ENCODE measurements at regions of chr1 and their contacts with region 1.

Region 1: GRCh38 chr1:67561704-67562113 is 123.3 kb upstream of the GADD45A start:
- DNase-seq: peak; percentile 64 to 87 (median 79)
- ATAC-seq: peak; percentile 80
- H3K4me3 ChIP-seq: no peak overlapping the region
- H3K4me3 Mint-ChIP-seq: no peak overlapping the region
- H3K27ac ChIP-seq: no peak overlapping the region
- H3K27ac Mint-ChIP-seq: no peak overlapping the region
- H3K4me1 ChIP-seq: no peaks in the 10 kb centered on the region
- H3K4me1 Mint-ChIP-seq: no peaks in the 10 kb centered on the region
- H3K27me3 ChIP-seq: no peaks in the 10 kb centered on the region
- H3K27me3 Mint-ChIP-seq: peaks cover 10% of the 10 kb centered on the region
- CTCF ChIP-seq: peak; percentile 88

Region 2: DNA sequence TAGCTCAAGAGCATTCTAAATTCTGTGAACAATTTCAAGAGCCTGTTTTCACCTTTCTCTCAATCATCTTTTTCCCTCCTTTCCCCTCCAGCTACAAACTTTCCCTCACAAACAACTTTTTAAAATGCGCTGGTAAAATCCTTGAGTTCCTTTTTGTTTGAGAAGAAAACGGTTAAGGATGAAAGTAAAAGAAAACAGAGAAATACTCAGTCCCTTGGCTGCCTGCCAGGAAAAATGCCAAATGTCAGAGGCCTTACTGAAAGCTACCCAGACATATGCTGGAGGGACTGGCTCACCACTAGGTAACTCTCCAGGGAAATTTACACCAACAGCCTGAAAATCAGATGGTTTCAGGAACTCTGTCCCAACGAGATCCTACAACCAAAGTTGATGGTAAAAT is 120.5 kb before region 1 on chr1:
- CTCF ChIA-PET with region 1: no interaction called
- POLR2A ChIA-PET with region 1: no interaction called
- intact Hi-C with region 1: no loop called
- DNase-seq: peak in 3 of 9 experiments; percentile 16 to 20 (median 18)
- ATAC-seq: no peak
- H3K4me3 ChIP-seq: no peak overlapping the region
- H3K4me3 Mint-ChIP-seq: no peak overlapping the region
- H3K27ac ChIP-seq: no peak overlapping the region
- H3K27ac Mint-ChIP-seq: no peak overlapping the region
- H3K4me1 ChIP-seq: no peaks in the 10 kb centered on the region
- H3K4me1 Mint-ChIP-seq: no peaks in the 10 kb centered on the region
- H3K27me3 ChIP-seq: no peaks in the 10 kb centered on the region
- H3K27me3 Mint-ChIP-seq: no peaks in the 10 kb centered on the region
- CTCF ChIP-seq: no peak

Region 3: GRCh38 chr1:67540733-67541125 is 21.0 kb before region 1 on chr1:
- CTCF ChIA-PET with region 1: interaction called, 16 read pairs
- POLR2A ChIA-PET with region 1: no interaction called
- intact Hi-C with region 1: no loop called
- DNase-seq: no peak
- ATAC-seq: no peak
- H3K4me3 ChIP-seq: no peak overlapping the region
- H3K4me3 Mint-ChIP-seq: no peak overlapping the region
- H3K27ac ChIP-seq: no peak overlapping the region
- H3K27ac Mint-ChIP-seq: no peak overlapping the region
- H3K4me1 ChIP-seq: no peaks in the 10 kb centered on the region
- H3K4me1 Mint-ChIP-seq: no peaks in the 10 kb centered on the region
- H3K27me3 ChIP-seq: no peaks in the 10 kb centered on the region
- H3K27me3 Mint-ChIP-seq: no peaks in the 10 kb centered on the region
- CTCF ChIP-seq: no peak

Region 4: GRCh38 chr1:67582625-67583461 is 21.1 kb after region 1 on chr1:
- CTCF ChIA-PET with region 1: interaction called, 25 read pairs
- POLR2A ChIA-PET with region 1: interaction called, 4 read pairs
- intact Hi-C with region 1: no loop called
- DNase-seq: no peak
- ATAC-seq: no peak
- H3K4me3 ChIP-seq: no peak overlapping the region
- H3K4me3 Mint-ChIP-seq: no peak overlapping the region
- H3K27ac ChIP-seq: no peak overlapping the region
- H3K27ac Mint-ChIP-seq: no peak overlapping the region
- H3K4me1 ChIP-seq: no peaks in the 10 kb centered on the region
- H3K4me1 Mint-ChIP-seq: peaks cover 2% of the 10 kb centered on the region
- H3K27me3 ChIP-seq: no peaks in the 10 kb centered on the region
- H3K27me3 Mint-ChIP-seq: no peaks in the 10 kb centered on the region
- CTCF ChIP-seq: no peak

Region 5: GRCh38 chr1:67766141-67766978 is 204.7 kb after region 1 on chr1:
- CTCF ChIA-PET with region 1: interaction called, 402 read pairs
- POLR2A ChIA-PET with region 1: no interaction called
- intact Hi-C with region 1: no loop called
- DNase-seq: peak in 7 of 9 experiments; percentile 1 to 53 (median 34)
- ATAC-seq: peak; percentile 61
- H3K4me3 ChIP-seq: peak overlapping the region; percentile 23 to 38
- H3K4me3 Mint-ChIP-seq: peak overlapping the region; percentile 61
- H3K27ac ChIP-seq: no peak overlapping the region
- H3K27ac Mint-ChIP-seq: no peak overlapping the region
- H3K4me1 ChIP-seq: peaks cover 3% of the 10 kb centered on the region
- H3K4me1 Mint-ChIP-seq: peaks cover 6% of the 10 kb centered on the region
- H3K27me3 ChIP-seq: peaks cover 0 to 3% of the 10 kb centered on the region in 2 experiments
- H3K27me3 Mint-ChIP-seq: peaks cover 33% of the 10 kb centered on the region
- CTCF ChIP-seq: peak; percentile 75